Sigmoid colon (tissue), 7 donors: ENCODE measurements at regions of chr16 and their contacts with region 1.

Region 1: GRCh38 chr16:27268376-27269299 is at the start of gene NSMCE1:
- DNase-seq: peak; percentile 99
- H3K4me3 ChIP-seq: peak within 1 kb of the TSS; percentile 50 to 89 (median 82)
- H3K27ac ChIP-seq: peak within 1 kb of the TSS; percentile 77 to 90 (median 88)
- H3K4me1 ChIP-seq: peaks cover 0 to 17% (median 13%) of the 10 kb centered on the region in 4 donors
- H3K27me3 ChIP-seq: no peaks in the 10 kb centered on the region
- CTCF ChIP-seq: peak in 2 of 4 experiments; percentile 28 to 46
- EP300 ChIP-seq: no peak
- POLR2A ChIP-seq: peak; percentile 74 to 84
- total RNA-seq, gene NSMCE1: 32.5 to 51.0 (median 45.1) TPM

Region 2: GRCh38 chr16:27203429-27204231 is 65.0 kb before region 1 on chr16 and contains the start of gene KDM8:
- intact Hi-C with region 1: loop called (anchors 5 kb)
- DNase-seq: peak; percentile 100
- H3K4me3 ChIP-seq: peak within 1 kb of the TSS; percentile 57 to 67 (median 60)
- H3K27ac ChIP-seq: peak within 1 kb of the TSS; percentile 91 to 96 (median 92)
- H3K4me1 ChIP-seq: peaks cover 0 to 15% (median 12%) of the 10 kb centered on the region in 4 donors
- H3K27me3 ChIP-seq: no peaks in the 10 kb centered on the region
- CTCF ChIP-seq: no peak
- EP300 ChIP-seq: peak in 1 of 4 donors; percentile 55
- POLR2A ChIP-seq: peak; percentile 52 to 54
- total RNA-seq, gene KDM8: 2.5 to 6.8 (median 3.7) TPM

Region 3: DNA sequence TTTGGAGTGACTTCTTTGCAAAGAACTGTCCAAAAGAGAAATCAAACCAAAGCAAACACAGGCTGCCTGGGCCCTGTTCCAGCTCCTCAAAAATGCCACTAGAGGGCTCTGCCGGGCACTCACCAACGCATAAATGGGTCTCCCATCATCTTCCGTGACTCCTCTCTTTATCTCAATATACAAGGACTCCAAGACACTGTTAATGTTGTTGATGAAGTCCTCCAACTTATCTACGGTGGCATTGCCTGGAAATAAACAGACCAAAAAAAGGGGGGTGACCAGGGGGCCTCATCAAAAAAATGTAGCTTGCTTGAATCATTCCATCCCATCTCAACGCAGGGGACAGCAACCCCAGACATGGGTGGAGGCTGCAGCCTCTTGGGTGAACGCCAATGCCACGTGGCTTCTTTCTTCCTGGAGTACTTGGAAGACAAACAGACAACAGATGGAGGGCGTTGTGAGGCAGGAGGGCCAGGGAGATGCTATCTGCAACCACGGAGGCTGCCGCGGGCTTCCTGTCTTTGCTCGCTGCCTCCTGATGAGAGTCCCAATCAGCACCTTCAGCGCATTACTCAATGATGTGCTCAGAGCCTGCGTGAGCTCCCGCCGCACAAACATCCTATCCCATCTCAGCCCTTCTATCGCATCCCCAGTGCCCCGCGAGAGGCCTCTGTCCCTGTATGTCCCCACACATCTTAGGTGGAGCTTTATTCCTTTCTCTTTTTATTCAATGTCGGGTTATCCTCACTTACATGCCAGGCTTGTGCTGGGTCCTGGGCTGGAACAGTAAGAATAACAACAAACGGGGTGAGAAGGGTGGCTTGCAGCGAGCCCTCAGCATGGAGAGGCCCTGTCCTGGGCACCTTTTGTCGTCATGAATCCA is 33.3 kb before region 1 on chr16:
- intact Hi-C with region 1: loop called (anchors 2 kb)
- DNase-seq: peak; percentile 95
- H3K4me3 ChIP-seq: peak overlapping the region in 3 of 4 donors; percentile 18 to 23 (median 23)
- H3K27ac ChIP-seq: peak overlapping the region; percentile 68 to 78 (median 72)
- H3K4me1 ChIP-seq: peaks cover 0 to 27% (median 22%) of the 10 kb centered on the region in 4 donors
- H3K27me3 ChIP-seq: no peaks in the 10 kb centered on the region
- CTCF ChIP-seq: peak; percentile 60 to 80 (median 70)
- EP300 ChIP-seq: no peak
- POLR2A ChIP-seq: no peak

Region 4: DNA sequence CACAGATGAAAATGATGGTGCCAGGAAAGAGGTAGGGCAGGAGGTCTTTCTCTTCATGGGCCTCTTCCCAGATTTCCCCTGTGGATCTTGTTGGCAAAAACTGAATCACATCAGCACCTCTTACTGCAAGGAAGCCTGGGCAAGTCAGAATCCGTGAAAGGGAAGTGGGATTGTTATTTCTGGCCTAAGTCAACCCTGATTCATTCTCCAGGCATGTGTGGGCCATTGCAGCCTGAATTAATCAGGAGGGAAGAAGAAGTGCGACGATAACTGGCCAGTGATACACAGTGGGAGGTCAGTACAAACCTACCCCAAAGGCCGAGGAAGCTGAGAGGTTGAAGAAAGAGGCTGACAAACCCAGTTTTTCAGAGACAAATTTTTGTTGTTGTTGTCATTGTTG is 17.8 kb after region 1 on chr16:
- intact Hi-C with region 1: no loop called
- DNase-seq: no peak
- H3K4me3 ChIP-seq: no peak overlapping the region
- H3K27ac ChIP-seq: peak overlapping the region in 1 of 4 donors; percentile 48
- H3K4me1 ChIP-seq: no peaks in the 10 kb centered on the region
- H3K27me3 ChIP-seq: no peaks in the 10 kb centered on the region
- CTCF ChIP-seq: no peak
- EP300 ChIP-seq: no peak
- POLR2A ChIP-seq: no peak